MCF 10A (cell line): ENCODE measurements at regions of chr7 and their contacts with region 1.

Region 1: DNA sequence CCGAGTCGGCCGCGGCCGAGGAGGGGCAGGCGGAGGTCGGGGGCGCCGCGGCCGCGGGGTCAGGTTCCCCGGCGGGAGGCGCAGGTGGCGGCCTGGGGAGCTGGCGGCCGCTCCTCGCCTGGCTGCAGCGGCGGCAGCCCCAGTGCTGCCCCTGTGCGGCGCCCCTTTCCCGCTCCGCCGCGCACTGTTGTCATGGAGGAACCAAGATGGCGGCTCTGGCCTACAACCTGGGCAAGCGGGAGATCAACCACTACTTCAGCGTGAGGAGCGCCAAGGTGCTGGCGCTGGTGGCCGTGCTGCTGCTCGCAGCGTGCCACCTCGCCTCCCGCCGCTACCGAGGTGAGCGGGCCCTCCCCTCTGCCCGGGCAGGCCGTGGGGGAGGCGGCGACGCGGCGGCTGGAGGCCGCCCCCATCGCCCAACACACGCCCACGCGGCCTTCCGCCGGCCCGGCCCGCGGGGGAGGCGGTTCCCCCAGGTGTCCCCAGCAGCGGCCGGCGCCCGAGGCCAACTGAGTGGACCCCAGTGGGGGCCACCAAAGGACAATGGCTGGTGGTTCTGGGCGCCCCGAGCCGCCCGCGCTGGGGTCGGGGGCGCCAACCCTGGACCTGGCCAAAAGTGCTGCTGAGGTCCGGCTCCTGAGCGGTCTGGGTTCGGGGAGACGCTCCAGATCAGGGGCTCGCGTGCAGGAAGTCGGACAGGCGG is 421 bp downstream of the CASD1 start:
- DNase-seq: peak; percentile 65
- H3K4me3 Mint-ChIP-seq: peak overlapping the region; percentile 69
- H3K27ac Mint-ChIP-seq: peak overlapping the region; percentile 43
- H3K4me1 Mint-ChIP-seq: peaks cover 32% of the 10 kb centered on the region
- H3K27me3 Mint-ChIP-seq: no peaks in the 10 kb centered on the region
- CTCF ChIP-seq: no peak

Region 2: DNA sequence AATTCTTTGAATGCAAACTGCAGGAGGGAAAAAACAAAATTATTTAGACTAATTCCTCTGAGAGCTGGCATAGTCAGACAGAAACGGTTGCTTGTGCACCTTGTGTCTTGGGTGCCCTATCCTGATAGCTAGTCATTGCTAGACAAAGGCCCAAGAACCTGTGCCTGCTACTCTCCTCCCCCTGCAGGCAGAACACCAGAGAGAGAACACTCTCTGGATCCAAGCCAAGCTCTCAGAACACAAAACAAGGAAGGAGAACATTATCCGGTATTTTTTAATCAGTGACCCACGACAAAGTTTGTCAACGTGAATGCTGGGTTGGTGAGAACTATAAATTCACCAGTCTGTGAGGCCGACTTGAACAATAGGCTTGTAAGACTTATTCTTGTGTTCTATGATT is 378.5 kb after region 1 on chr7:
- CTCF ChIA-PET with region 1: no interaction called
- POLR2A ChIA-PET with region 1: no interaction called
- intact Hi-C with region 1: loop called (anchors 1 kb)
- DNase-seq: peak; percentile 59
- H3K4me3 Mint-ChIP-seq: no peak overlapping the region
- H3K27ac Mint-ChIP-seq: no peak overlapping the region
- H3K4me1 Mint-ChIP-seq: no peaks in the 10 kb centered on the region
- H3K27me3 Mint-ChIP-seq: no peaks in the 10 kb centered on the region
- CTCF ChIP-seq: peak; percentile 19